ENCODE measurements at regions of chr12 and their contacts with region 1.

Region 1: GRCh38 chr12:69359531-69360347 is at the start of gene YEATS4:
- DNase-seq: peak; percentile 92
- ATAC-seq: peak; percentile 83
- H3K4me3 Mint-ChIP-seq: peak within 1 kb of the TSS; percentile 91
- H3K27ac Mint-ChIP-seq: peak within 1 kb of the TSS; percentile 97
- H3K4me1 Mint-ChIP-seq: peaks cover 29% of the 10 kb centered on the region
- H3K27me3 Mint-ChIP-seq: peaks cover 1% of the 10 kb centered on the region
- total RNA-seq, gene YEATS4: 55.4 to 59.8 TPM

Region 2: GRCh38 chr12:69070319-69071090 is 289.2 kb before region 1 on chr12:
- CTCF ChIA-PET with region 1: no interaction called
- POLR2A ChIA-PET with region 1: no interaction called
- intact Hi-C with region 1: no loop called
- DNase-seq: peak; percentile 80
- ATAC-seq: peak; percentile 79
- H3K4me3 Mint-ChIP-seq: no peak overlapping the region
- H3K27ac Mint-ChIP-seq: no peak overlapping the region
- H3K4me1 Mint-ChIP-seq: peaks cover 19% of the 10 kb centered on the region
- H3K27me3 Mint-ChIP-seq: peaks cover 14% of the 10 kb centered on the region

Region 3: DNA sequence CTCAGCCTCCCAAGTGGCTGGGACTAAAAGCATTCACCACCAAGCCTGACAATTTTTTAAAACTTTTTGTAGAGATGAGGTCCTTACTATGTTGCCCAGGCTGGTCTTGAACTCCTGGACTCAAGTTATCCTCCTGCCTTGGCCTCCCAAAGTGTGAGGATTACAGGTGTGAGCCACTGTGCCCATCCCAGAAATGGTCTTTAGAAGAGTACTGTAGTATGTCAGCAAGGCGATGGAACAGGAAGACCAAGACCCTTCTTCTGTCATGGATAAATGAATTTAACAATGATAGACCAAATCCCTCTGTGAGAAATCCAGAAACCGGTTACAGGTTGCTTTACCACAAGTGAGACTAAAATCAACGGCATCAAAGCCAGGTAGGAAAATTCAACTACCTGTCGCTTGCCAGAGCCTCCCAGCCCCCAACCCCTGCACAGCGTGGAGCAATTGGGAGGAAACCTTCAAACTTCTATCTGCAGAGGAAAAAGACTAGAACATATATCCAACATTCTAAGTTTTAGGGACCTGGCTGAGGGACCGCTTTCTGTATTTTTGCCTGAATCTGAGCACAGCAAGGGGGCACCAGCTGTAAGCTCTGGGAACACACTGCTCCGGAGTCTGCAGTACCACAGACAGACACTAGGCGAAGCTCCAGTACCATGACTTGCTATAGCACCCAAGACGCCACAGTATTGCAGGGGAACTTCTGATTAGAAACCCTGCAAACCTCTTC is 69.0 kb before region 1 on chr12:
- CTCF ChIA-PET with region 1: interaction called, 7 read pairs
- POLR2A ChIA-PET with region 1: no interaction called
- intact Hi-C with region 1: loop called in 1 of 2 experiments (anchors 2 kb)
- DNase-seq: peak; percentile 88
- ATAC-seq: peak; percentile 100
- H3K4me3 Mint-ChIP-seq: no peak overlapping the region
- H3K27ac Mint-ChIP-seq: no peak overlapping the region
- H3K4me1 Mint-ChIP-seq: peaks cover 4% of the 10 kb centered on the region
- H3K27me3 Mint-ChIP-seq: peaks cover 19% of the 10 kb centered on the region

Region 4: DNA sequence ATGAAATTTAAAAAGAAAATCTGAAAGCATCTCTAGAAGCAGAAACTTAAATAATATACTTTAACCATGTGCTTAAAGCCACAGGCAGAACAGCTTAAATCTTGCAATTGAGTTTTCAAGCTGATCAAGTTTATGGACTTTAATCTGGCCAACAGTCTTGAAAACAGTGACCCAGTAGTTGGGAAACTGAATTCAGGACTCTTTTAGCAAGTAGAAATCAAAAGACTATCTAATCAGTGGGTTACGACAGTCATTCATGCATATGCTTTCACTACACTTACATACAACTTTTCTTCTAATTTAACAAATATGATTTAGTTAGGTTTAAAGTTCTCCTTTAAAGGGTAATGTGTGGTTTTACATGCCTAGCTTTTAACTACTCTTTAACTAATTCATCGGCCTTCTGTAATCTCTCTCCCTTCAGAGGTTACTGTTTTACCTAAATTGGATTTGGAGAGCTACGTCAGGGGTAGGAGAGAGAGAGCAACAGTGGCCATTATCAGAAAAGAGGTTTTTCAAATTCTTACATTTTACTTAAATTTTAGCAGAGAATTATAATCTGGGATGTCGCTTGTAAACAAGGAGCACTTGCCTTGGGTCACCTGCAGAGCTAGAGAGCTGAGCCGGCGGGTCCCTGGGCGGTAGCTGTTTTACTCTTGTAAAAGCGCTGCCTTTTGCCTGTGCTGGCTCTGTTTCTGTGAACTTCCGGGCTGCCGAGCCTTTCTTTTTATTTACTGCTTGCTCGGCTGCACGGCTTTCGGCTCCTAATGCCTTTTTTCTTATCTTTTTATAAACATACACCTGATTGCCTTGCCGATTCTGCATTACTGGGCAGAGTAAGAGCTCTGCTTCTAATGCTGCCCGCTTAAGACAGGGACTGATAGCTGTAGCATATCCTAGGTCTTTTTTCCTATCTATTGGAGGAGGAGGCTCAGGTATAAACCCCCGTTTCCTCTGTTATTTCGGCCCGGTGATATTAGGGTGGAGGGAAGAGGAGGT is 29.0 kb before region 1 on chr12:
- CTCF ChIA-PET with region 1: interaction called, 15 read pairs
- POLR2A ChIA-PET with region 1: no interaction called
- intact Hi-C with region 1: loop called in 1 of 2 experiments (anchors 1 kb)
- DNase-seq: peak; percentile 72
- ATAC-seq: peak; percentile 78
- H3K4me3 Mint-ChIP-seq: peak overlapping the region; percentile 72
- H3K27ac Mint-ChIP-seq: peak overlapping the region; percentile 82
- H3K4me1 Mint-ChIP-seq: peaks cover 36% of the 10 kb centered on the region
- H3K27me3 Mint-ChIP-seq: no peaks in the 10 kb centered on the region

Region 5: DNA sequence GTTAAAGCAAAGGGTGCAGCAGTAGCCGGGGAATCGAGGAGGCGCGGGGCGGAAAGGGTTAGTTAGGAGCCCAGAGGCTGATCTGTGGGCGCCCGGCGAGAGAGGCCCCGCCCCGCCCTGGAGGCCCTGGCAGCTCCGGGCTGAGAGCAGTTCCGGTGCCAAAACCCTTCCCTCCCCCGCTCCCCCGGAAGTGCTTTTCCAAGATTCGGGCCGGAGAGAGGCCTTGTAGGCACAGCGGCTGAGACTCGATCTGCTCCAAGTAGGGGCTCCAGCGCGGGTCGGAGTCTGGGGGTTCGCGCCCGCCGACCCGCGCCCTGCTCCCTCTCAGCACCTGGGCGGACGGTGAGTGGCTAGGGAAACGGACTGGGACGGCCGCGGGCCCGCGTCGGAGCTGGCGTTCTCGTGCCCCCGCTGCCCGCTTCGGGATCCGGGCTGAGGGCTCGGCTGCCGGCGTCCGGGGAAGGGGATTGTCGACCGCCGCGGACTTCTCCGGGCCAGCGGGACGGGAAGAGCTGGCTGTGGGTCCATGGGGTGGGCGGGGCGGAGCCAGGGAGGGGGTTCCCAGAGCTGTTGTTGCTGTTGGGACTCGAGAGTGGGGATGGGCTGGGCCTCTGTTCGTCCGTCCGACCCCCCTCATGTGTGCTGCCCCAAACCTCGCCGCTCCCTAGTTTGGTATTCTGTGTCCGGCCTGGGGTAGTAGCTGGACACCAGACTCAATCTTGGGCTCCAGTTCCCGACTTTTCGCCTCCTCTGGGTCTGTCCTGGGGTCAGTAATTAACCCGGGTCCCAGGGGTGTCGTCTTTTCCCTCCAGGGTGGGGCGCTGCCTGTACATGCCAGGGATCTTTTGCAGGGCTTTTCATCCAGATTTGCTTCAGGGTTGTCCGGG is 110.7 kb after region 1 on chr12 and contains the start of gene FRS2:
- CTCF ChIA-PET with region 1: no interaction called
- POLR2A ChIA-PET with region 1: no interaction called
- intact Hi-C with region 1: loop called (anchors 1 to 2 kb)
- DNase-seq: peak; percentile 93
- ATAC-seq: peak; percentile 99
- H3K4me3 Mint-ChIP-seq: peak within 1 kb of the TSS; percentile 92
- H3K27ac Mint-ChIP-seq: peak within 1 kb of the TSS; percentile 99
- H3K4me1 Mint-ChIP-seq: peaks cover 52% of the 10 kb centered on the region
- H3K27me3 Mint-ChIP-seq: no peaks in the 10 kb centered on the region
- total RNA-seq, gene FRS2: 9.5 to 10.4 TPM

Region 6: GRCh38 chr12:69585189-69586062 is 225.7 kb after region 1 on chr12 and contains the start of gene CCT2:
- CTCF ChIA-PET with region 1: interaction called, 4 read pairs
- POLR2A ChIA-PET with region 1: interaction called, 3 read pairs
- intact Hi-C with region 1: loop called (anchors 1 kb)
- DNase-seq: peak; percentile 98
- ATAC-seq: peak; percentile 94
- H3K4me3 Mint-ChIP-seq: peak within 1 kb of the TSS; percentile 96
- H3K27ac Mint-ChIP-seq: peak within 1 kb of the TSS; percentile 95
- H3K4me1 Mint-ChIP-seq: peaks cover 30% of the 10 kb centered on the region
- H3K27me3 Mint-ChIP-seq: no peaks in the 10 kb centered on the region
- total RNA-seq, gene CCT2: 293 to 360 TPM

Region 7: DNA sequence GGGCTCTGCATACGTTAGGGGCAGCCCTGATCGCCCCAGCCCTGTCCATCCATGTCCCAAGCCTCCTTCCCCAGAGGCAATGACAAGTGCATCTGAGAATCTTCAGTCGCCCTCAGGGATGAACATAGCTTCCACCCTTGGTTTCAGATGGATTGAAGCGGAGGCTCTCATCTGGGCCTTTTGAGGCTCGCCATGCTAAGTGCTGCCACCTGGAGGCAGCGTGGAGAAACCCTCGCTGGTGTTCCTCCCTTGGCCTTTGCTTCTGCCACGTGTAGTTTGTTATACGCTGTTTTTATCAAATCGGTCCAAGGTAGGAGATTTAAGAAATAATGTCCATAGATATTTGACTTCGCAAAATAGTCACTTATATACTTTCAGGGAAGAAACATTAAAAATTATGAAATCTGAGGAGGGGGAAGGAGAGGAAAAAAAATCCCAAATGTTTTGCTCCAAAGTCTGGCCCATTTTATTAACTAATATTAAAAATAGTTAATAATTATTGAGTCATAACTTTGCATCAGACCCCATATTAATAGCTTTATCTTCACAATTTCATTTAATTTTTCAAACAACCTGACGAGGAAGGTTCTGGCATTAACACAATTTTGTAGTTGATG is 279.8 kb after region 1 on chr12:
- CTCF ChIA-PET with region 1: interaction called, 27 read pairs
- POLR2A ChIA-PET with region 1: no interaction called
- intact Hi-C with region 1: loop called (anchors 1 kb)
- DNase-seq: peak; percentile 79
- ATAC-seq: peak; percentile 88
- H3K4me3 Mint-ChIP-seq: no peak overlapping the region
- H3K27ac Mint-ChIP-seq: no peak overlapping the region
- H3K4me1 Mint-ChIP-seq: no peaks in the 10 kb centered on the region
- H3K27me3 Mint-ChIP-seq: no peaks in the 10 kb centered on the region

Region 8: GRCh38 chr12:69738351-69739286 is 378.9 kb after region 1 on chr12 and contains the start of gene RAB3IP:
- CTCF ChIA-PET with region 1: interaction called, 4 read pairs
- POLR2A ChIA-PET with region 1: interaction called, 4 read pairs
- intact Hi-C with region 1: loop called (anchors 1 kb)
- DNase-seq: peak; percentile 97
- ATAC-seq: peak; percentile 88
- H3K4me3 Mint-ChIP-seq: peak within 1 kb of the TSS; percentile 79
- H3K27ac Mint-ChIP-seq: peak within 1 kb of the TSS; percentile 75
- H3K4me1 Mint-ChIP-seq: peaks cover 26% of the 10 kb centered on the region
- H3K27me3 Mint-ChIP-seq: peaks cover 10% of the 10 kb centered on the region
- total RNA-seq, gene RAB3IP: 30.7 to 39.9 TPM